PC-3 (cell line): ENCODE measurements at regions of chr21 and their contacts with region 1.

Region 1: GRCh38 chr21:36504067-36505058 is 24.4 kb upstream of the CLDN14 start:
- DNase-seq: peak; percentile 78
- ATAC-seq: no peak
- H3K4me3 ChIP-seq: no peak overlapping the region
- H3K27ac ChIP-seq: no peak overlapping the region
- H3K4me1 ChIP-seq: peaks cover 46% of the 10 kb centered on the region
- H3K27me3 ChIP-seq: no peaks in the 10 kb centered on the region
- CTCF ChIP-seq: peak; percentile 92

Region 2: DNA sequence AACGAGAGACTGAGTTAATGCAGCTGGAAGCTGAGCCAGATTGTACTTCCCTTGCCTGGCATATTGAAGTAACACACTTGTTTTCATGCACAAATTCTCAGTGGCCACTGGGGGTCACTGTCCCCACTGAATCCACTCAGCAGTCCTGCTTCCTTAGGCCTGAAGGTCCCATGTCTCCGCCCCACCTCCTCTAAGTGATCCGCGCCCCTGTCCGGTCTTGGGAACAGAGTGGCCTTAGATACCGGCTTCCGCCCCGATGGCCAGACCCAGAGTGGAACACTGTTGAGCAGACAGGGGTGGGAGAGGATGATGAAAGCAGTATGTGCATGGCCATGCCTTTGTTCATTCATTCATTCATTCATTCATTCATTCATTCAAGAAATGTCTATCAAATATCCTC is 84.4 kb before region 1 on chr21:
- CTCF ChIA-PET with region 1: interaction called, 3 read pairs
- POLR2A ChIA-PET with region 1: no interaction called
- intact Hi-C with region 1: loop called (anchors 1 kb)
- DNase-seq: peak; percentile 90
- ATAC-seq: peak; percentile 92
- H3K4me3 ChIP-seq: no peak overlapping the region
- H3K27ac ChIP-seq: no peak overlapping the region; the same call in 1 of the 2 replicates
- H3K4me1 ChIP-seq: no peaks in the 10 kb centered on the region; the same call in 1 of the 2 replicates
- H3K27me3 ChIP-seq: no peaks in the 10 kb centered on the region
- CTCF ChIP-seq: peak; percentile 88

Region 3: GRCh38 chr21:36466061-36466511 is 38.3 kb before region 1 on chr21:
- CTCF ChIA-PET with region 1: interaction called, 3 read pairs
- POLR2A ChIA-PET with region 1: no interaction called
- intact Hi-C with region 1: loop called (anchors 1 kb)
- DNase-seq: peak; percentile 89
- ATAC-seq: peak; percentile 61
- H3K4me3 ChIP-seq: peak overlapping the region; percentile 29; the same call in 1 of the 2 replicates
- H3K27ac ChIP-seq: peak overlapping the region; percentile 97
- H3K4me1 ChIP-seq: peaks cover 60% of the 10 kb centered on the region
- H3K27me3 ChIP-seq: no peaks in the 10 kb centered on the region
- CTCF ChIP-seq: no peak

Region 4: GRCh38 chr21:36563341-36563926 is 59.1 kb after region 1 on chr21:
- CTCF ChIA-PET with region 1: no interaction called
- POLR2A ChIA-PET with region 1: no interaction called
- intact Hi-C with region 1: no loop called
- DNase-seq: no peak
- ATAC-seq: no peak
- H3K4me3 ChIP-seq: no peak overlapping the region
- H3K27ac ChIP-seq: no peak overlapping the region
- H3K4me1 ChIP-seq: no peaks in the 10 kb centered on the region
- H3K27me3 ChIP-seq: no peaks in the 10 kb centered on the region
- CTCF ChIP-seq: no peak

Region 5: GRCh38 chr21:36589355-36589971 is 85.1 kb after region 1 on chr21:
- CTCF ChIA-PET with region 1: no interaction called
- POLR2A ChIA-PET with region 1: no interaction called
- intact Hi-C with region 1: loop called (anchors 2 kb)
- DNase-seq: peak; percentile 70
- ATAC-seq: no peak; the same call in 1 of the 2 replicates
- H3K4me3 ChIP-seq: no peak overlapping the region
- H3K27ac ChIP-seq: no peak overlapping the region
- H3K4me1 ChIP-seq: peaks cover 18% of the 10 kb centered on the region
- H3K27me3 ChIP-seq: no peaks in the 10 kb centered on the region
- CTCF ChIP-seq: peak; percentile 87

Region 6: DNA sequence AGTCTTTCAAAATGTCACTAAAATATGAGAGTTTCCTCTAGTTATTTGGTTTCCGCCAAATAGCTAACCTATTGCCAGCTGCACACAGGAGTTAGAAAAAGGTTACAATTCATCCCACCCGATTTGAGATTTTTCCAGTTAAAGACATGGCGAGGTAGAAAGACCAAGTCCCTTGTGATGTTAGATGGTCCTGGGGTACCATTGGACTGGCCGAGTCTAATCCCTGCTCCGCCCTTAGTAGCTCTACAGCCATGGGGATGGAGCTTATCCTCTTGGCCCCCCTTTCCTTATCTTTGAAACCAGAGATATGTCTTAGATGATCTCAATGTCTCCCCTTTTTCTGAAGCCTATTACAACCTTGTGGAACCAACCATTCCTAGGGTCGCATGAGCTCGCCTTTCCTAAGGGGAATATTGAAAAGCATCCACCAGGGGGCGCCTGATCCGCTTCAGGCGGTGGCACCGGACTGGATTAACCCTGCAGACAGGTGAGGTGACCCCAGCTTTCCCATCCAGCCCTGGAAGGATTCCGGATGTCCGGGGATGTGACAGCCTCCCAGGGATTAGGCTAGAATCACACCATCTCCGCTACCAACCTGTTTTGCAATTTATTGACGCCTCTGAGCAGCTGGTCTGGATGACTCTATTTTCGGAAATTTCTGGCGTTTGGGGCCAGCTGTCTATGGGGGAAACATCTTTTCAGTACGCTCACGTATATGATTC is 126.3 kb after region 1 on chr21:
- CTCF ChIA-PET with region 1: no interaction called
- POLR2A ChIA-PET with region 1: no interaction called
- intact Hi-C with region 1: loop called (anchors 2 kb)
- DNase-seq: peak; percentile 80
- ATAC-seq: peak; percentile 49
- H3K4me3 ChIP-seq: no peak overlapping the region
- H3K27ac ChIP-seq: no peak overlapping the region
- H3K4me1 ChIP-seq: peaks cover 16% of the 10 kb centered on the region
- H3K27me3 ChIP-seq: no peaks in the 10 kb centered on the region
- CTCF ChIP-seq: peak; percentile 94

Region 7: DNA sequence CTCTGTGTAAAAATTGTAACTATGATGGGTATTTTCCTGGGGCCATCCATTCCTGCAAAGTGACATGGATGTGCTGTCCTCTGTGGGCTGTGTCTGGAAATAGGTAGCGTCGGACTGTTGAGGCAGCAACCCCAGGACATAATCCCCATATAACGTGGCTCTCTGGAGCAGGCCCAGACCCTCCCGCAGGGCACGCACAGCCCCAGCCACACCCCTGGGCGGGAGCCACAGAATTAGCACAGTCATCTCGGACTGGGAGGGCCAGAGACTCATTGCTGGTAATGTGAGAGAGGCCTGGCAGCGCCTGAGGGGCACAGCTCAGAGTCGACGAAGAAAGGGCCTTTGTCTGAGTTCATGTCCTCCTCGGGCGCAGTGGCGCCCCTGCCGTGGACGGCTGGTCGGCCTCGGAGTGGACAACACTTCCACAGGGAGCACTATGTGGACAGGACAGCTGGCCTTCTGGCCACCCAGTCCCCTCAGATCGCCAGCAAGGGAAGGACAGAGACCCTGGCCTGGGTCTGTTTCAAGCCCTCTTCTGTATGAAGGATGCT is 214.7 kb after region 1 on chr21:
- CTCF ChIA-PET with region 1: no interaction called
- POLR2A ChIA-PET with region 1: no interaction called
- intact Hi-C with region 1: loop called (anchors 5 kb)
- DNase-seq: peak; percentile 95
- ATAC-seq: peak; percentile 89
- H3K4me3 ChIP-seq: no peak overlapping the region
- H3K27ac ChIP-seq: peak overlapping the region; percentile 83
- H3K4me1 ChIP-seq: peaks cover 16% of the 10 kb centered on the region
- H3K27me3 ChIP-seq: no peaks in the 10 kb centered on the region
- CTCF ChIP-seq: peak; percentile 46; the same call in 1 of the 2 replicates

Region 8: DNA sequence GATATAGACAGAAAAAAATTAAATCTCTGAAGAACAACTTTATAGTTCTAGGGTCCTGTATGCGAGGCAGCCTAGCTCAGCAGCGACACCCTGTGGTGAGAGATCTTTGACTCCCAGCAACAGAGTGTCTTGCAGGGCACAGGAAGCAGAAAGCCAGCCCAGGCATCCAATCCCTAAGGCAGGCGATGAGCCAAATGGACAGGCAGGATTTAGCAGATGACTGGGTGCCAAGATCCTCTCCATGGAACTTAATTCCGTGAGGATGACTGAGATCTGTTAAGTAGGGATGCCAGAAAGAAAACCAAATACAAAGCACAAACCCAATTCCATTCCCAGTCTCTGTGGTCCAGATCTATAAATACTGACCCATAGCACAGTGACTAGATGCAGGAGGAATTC is 423.4 kb after region 1 on chr21:
- CTCF ChIA-PET with region 1: no interaction called
- POLR2A ChIA-PET with region 1: no interaction called
- intact Hi-C with region 1: loop called (anchors 5 kb)
- DNase-seq: peak; percentile 95
- ATAC-seq: peak; percentile 93
- H3K4me3 ChIP-seq: no peak overlapping the region
- H3K27ac ChIP-seq: peak overlapping the region; percentile 68
- H3K4me1 ChIP-seq: peaks cover 22% of the 10 kb centered on the region
- H3K27me3 ChIP-seq: no peaks in the 10 kb centered on the region
- CTCF ChIP-seq: peak; percentile 98